ENCODE measurements at regions of chr3 and their contacts with region 1.

Region 1: DNA sequence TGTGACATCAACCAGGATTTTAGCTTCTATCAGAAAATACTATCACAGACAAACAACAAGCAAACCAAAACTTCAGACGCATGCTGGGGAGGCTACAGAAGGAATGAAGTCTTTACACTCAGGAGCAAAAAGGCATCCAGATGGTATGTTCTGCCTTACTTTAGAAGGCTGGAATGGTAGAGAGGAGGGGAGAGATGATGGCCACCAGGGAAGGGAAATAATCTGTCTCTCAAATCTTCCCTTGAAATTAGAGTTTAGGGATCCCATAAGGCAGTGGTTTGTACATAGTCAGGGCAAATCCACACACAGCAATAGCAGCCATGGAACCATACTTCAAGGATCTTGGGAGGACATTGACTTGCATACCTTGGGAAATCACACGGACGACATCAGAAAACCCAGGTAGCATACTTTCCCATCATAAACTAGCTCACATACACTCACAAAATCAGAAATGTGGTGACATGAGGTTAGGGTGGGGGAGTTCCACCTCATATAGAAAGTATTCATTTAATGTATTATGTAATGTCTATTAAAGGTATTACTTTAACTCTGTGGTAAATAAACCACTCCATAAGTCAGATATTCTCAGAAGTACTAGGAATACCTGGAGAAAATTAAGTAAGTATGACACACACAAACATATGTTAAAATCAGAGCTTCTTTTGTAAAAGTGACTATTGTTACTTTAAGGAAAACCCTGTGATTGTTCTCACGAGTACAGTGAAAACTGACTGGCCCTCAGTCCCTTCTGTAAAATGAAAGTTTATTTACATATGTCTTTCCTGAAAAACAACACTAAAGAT is 9.4 kb downstream of the BTLA start:
- DNase-seq: peak; percentile 57
- H3K4me3 Mint-ChIP-seq: peak overlapping the region; percentile 76
- H3K27ac Mint-ChIP-seq: peak overlapping the region; percentile 87
- H3K4me1 Mint-ChIP-seq: peaks cover 54% of the 10 kb centered on the region
- H3K27me3 Mint-ChIP-seq: no peaks in the 10 kb centered on the region

Region 2: DNA sequence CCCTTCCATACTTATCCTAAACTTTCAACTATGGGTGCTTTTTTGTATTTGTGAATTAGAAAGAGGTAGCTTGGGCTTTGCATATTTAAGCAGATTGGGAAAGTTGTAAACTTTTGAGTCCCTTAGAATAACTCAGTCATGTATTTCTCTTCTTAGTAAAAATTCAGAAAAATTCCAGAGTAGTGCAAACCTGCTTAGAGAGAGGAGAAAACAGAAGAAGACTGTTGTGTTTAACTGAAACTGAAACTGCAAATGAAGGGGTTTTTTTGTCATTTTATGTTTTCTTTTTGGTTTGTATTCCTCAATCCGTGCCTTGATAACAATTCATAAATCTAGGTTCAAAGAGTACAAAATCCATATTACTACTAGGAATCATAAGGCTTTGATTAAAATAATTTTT is 125.6 kb before region 1 on chr3:
- intact Hi-C with region 1: loop called (anchors 1 kb)
- DNase-seq: no peak
- H3K4me3 Mint-ChIP-seq: peak overlapping the region; percentile 72
- H3K27ac Mint-ChIP-seq: peak overlapping the region; percentile 80
- H3K4me1 Mint-ChIP-seq: peaks cover 35% of the 10 kb centered on the region
- H3K27me3 Mint-ChIP-seq: no peaks in the 10 kb centered on the region

Region 3: DNA sequence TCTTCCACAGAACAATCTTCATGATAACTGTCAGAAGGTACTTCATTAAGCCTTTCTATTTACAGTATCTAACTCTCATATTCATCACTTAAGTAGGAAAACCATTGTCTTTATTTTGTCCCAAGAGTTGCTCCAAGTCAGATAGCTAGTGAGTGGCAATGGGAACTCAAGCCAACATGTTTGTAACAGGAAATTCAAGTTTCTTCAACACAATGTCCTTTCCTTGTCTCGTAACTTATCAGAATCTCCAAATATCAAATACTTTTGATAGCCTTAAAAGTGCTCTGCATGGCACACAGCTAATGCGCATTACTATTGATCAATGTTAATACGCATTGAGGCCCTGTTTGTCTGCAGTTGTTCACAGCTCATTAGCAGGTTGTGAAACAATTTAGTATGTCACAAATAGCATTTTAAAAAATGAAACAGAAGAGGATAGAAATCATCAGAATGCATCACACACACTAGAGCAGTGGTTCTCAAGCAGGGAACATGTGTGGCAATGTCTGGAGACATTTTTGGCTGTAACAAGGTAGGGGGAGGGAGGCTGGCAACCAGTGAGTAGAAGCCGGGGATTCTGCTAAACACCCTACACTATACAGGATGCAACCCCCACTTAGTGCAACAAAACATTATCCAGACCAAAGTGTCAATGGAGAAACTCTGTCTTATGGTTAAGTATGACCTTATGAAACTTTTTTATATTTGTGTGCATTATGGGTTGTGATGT is 18.1 kb before region 1 on chr3:
- intact Hi-C with region 1: loop called (anchors 2 kb)
- DNase-seq: no peak
- H3K4me3 Mint-ChIP-seq: no peak overlapping the region
- H3K27ac Mint-ChIP-seq: peak overlapping the region; percentile 26
- H3K4me1 Mint-ChIP-seq: peaks cover 67% of the 10 kb centered on the region
- H3K27me3 Mint-ChIP-seq: no peaks in the 10 kb centered on the region

Measured in activated CD4-positive, alpha-beta T cell treated with anti-CD3 and anti-CD28 coated beads, Interleukin-2, amount 10 ng/mL, durations not matched to agents 24 days and 14 days (primary cell).